Right lobe of liver (tissue), 6 donors: ENCODE measurements at regions of chr10 and their contacts with region 1.

Region 1: DNA sequence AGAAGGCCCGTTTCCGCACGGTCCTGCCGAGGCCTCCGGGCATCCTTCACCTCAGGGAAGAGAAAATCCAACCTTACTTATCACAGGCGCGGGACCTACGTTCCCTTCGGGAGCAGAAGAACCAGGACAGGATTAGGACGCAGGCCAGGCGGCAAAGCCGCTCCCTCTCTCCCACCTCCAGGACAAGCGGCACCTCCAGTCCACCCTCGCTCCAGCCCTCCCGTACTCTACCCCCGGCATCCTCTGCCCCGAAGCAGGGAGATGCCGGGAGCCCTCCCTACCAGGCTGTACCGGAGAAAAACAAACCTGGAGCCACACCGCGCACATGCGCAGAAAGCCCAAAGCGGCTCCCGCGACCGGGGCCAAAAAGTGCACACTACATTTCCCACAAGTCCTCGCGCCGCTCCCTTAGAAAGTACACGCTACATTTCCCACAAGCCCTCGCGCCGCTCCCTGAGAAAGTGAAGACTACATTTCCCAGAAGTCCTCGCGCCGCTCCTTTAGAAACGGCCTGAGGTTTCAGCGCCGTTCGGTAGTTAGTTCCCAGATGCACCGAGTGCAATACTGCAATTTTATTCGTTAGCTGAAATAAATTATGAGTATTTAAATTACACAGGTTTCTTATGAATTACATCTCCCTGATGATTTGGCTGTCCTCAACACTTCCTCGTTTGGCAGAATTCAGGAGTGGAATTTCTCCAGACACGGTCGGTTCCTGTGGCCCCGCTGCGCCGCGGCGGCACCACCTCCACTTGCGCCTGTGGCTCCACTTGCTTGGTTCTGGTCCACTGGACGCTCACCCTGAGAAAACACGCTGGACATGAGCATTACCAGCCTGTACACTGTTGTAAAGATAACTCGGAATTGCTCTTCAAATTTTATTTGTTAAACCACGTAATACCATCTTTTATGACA is 85.6 kb downstream of the ZNF33B start:
- DNase-seq: peak; percentile 96 to 98 (median 98)
- ATAC-seq: peak; percentile 99
- H3K4me3 ChIP-seq: peak overlapping the region; percentile 69 to 81 (median 76)
- H3K27ac ChIP-seq: peak overlapping the region in 1 of 3 donors; percentile 48
- H3K4me1 ChIP-seq: peaks cover 0 to 4% (median 0%) of the 10 kb centered on the region in 4 donors
- H3K27me3 ChIP-seq: no peaks in the 10 kb centered on the region
- CTCF ChIP-seq: no peak
- POLR2A ChIP-seq: peak; percentile 69

Region 2: DNA sequence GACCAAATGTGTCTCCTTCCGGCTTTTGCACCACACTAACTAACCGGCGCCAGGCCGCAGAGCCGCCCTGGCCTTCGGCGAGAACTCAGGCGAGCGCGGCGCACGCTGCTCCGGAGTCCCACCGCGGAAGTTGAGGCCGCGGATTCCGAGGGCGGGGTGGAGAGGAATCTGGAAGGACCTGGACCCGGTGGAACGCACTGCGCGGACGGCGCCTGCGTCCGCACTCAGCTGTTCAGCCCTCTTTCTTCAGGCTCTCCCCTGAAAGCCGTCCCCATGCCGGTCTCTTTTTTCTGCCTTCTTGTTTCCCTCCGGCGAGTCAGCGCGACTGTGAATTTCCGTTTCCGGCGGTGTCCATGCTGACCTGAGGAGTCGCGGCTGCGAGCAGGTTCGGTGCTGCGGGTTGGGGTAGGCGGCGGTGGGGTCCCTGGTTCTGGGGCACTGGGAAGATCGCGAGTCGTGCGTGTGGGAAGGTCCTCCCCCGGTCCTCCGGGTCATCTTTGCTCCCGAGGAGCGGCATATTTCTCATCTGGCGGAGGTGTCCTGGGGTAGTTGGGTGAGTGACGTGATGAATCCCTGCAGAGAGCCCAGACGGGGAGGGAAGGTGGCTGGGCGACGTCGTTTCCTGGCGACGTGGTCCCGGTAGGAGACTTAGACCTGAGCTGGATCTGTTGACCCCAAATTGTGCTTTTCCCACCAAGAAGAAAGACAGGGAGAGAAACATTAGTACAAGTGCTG is 229.9 kb after region 1 on chr10 and contains the start of gene BMS1:
- intact Hi-C with region 1: loop called in 1 of 2 experiments (anchors 10 kb)
- DNase-seq: peak; percentile 90 to 92 (median 91)
- ATAC-seq: peak; percentile 94 to 96 (median 96)
- H3K4me3 ChIP-seq: peak within 1 kb of the TSS; percentile 77 to 85 (median 79)
- H3K27ac ChIP-seq: peak within 1 kb of the TSS; percentile 94 to 95 (median 94)
- H3K4me1 ChIP-seq: peaks cover 0 to 7% (median 0%) of the 10 kb centered on the region in 4 donors
- H3K27me3 ChIP-seq: no peaks in the 10 kb centered on the region
- CTCF ChIP-seq: no peak
- POLR2A ChIP-seq: peak; percentile 80
- total RNA-seq, gene BMS1: 4.1 to 8.3 (median 5.8) TPM

Region 3: DNA sequence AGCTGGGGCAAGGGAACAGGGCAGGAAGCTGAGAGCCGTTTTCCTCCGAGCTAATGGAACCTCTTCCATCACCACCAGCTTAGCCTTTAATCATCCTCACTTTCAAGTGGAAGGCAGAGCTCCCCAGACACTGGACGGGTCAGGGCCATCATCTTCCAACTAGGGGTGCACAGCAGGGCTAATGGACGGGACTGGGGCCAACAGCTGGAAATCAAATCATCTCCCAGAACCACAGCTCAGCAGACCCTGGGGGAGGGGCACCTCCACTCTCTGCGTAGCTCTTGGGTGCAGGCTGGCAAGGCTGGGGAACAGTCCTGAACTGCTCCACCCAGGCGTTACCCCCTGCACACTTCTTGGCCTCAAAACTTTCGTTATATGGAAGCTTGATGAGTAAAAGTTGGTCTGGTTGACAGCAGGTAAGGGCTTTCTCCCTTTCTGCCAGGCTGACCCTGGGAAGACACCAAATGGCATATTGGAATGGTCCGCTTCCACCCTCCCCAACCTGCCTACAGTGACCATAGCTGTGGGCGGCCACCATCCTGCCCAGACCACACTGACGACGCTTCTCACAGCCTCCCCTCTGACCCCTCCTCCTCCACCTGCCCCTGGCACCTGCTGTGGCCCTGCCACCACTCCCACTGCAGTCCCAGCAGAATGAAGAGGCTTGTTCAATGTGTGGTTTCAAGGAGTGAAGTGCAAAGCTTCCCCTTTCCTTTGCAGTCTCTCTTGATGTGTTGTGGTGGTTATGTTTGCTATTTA is 472.4 kb after region 1 on chr10:
- intact Hi-C with region 1: no loop called
- DNase-seq: no peak
- ATAC-seq: no peak
- H3K4me3 ChIP-seq: no peak overlapping the region
- H3K27ac ChIP-seq: no peak overlapping the region
- H3K4me1 ChIP-seq: peaks cover 0 to 6% (median 0%) of the 10 kb centered on the region in 4 donors
- H3K27me3 ChIP-seq: no peaks in the 10 kb centered on the region
- CTCF ChIP-seq: no peak
- POLR2A ChIP-seq: no peak

Region 4: GRCh38 chr10:43105102-43105785 is 552.5 kb after region 1 on chr10:
- intact Hi-C with region 1: loop called in 1 of 2 experiments (anchors 10 kb)
- DNase-seq: peak; percentile 71 to 78 (median 74)
- ATAC-seq: peak; percentile 93 to 98 (median 97)
- H3K4me3 ChIP-seq: peak overlapping the region; percentile 40 to 59 (median 50)
- H3K27ac ChIP-seq: no peak overlapping the region
- H3K4me1 ChIP-seq: peaks cover 0 to 9% (median 0%) of the 10 kb centered on the region in 4 donors
- H3K27me3 ChIP-seq: no peaks in the 10 kb centered on the region
- CTCF ChIP-seq: peak; percentile 99 to 100 (median 99)
- POLR2A ChIP-seq: no peak